ENCODE measurements at regions of chr1 and their contacts with region 1.

Region 1: DNA sequence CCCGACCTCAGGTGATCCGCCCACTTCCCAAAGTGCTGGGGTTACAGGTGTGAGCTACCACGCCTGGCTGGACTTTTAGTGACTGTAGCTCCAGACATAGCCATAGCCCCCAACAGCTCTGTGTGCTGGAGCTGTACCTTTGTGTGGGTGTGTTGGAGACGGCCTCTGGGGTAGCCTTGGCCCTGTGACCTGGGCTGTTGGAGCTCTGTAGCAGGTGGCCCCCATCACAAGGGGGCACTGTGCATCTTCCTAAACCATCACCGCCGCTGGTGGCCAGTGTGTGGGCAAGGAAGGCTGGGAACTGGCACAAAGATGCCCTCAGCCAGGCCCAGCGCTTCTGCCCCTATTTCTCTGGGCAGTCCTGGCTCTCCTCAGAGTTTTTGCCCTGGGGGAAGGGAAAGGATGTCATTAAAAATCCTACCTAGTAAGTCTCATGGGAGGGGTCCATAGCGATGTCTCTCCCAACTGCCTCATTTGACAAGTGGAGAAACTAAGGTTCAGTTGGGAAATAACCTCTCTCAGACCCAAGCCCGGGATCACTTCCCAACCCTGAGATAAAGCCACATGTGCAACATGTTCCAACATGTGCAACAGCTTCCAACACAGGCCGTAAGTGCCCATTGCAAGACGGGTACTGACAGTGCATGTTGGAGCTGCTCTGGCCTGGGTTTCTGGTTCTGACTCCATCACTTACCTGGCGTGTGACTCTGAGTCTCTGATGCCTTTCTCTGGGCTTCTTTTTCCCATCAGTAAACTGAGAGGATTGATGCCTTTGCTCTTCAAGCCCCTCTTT is 38.2 kb upstream of the FOXO6 start:
- DNase-seq: peak; percentile 47
- H3K4me3 Mint-ChIP-seq: no peak overlapping the region
- H3K27ac Mint-ChIP-seq: no peak overlapping the region
- H3K4me1 Mint-ChIP-seq: no peaks in the 10 kb centered on the region
- H3K27me3 Mint-ChIP-seq: peaks cover 2% of the 10 kb centered on the region

Region 2: GRCh38 chr1:41345434-41346075 is 22.5 kb after region 1 on chr1:
- CTCF ChIA-PET with region 1: no interaction called
- POLR2A ChIA-PET with region 1: no interaction called
- intact Hi-C with region 1: loop called (anchors 1 kb)
- DNase-seq: no peak
- H3K4me3 Mint-ChIP-seq: no peak overlapping the region
- H3K27ac Mint-ChIP-seq: no peak overlapping the region
- H3K4me1 Mint-ChIP-seq: peaks cover 5% of the 10 kb centered on the region
- H3K27me3 Mint-ChIP-seq: peaks cover 23% of the 10 kb centered on the region

Region 3: GRCh38 chr1:41387667-41388091 is 64.6 kb after region 1 on chr1:
- CTCF ChIA-PET with region 1: no interaction called
- POLR2A ChIA-PET with region 1: no interaction called
- intact Hi-C with region 1: no loop called
- DNase-seq: no peak
- H3K4me3 Mint-ChIP-seq: no peak overlapping the region
- H3K27ac Mint-ChIP-seq: no peak overlapping the region
- H3K4me1 Mint-ChIP-seq: peaks cover 9% of the 10 kb centered on the region
- H3K27me3 Mint-ChIP-seq: peaks cover 35% of the 10 kb centered on the region

Region 4: DNA sequence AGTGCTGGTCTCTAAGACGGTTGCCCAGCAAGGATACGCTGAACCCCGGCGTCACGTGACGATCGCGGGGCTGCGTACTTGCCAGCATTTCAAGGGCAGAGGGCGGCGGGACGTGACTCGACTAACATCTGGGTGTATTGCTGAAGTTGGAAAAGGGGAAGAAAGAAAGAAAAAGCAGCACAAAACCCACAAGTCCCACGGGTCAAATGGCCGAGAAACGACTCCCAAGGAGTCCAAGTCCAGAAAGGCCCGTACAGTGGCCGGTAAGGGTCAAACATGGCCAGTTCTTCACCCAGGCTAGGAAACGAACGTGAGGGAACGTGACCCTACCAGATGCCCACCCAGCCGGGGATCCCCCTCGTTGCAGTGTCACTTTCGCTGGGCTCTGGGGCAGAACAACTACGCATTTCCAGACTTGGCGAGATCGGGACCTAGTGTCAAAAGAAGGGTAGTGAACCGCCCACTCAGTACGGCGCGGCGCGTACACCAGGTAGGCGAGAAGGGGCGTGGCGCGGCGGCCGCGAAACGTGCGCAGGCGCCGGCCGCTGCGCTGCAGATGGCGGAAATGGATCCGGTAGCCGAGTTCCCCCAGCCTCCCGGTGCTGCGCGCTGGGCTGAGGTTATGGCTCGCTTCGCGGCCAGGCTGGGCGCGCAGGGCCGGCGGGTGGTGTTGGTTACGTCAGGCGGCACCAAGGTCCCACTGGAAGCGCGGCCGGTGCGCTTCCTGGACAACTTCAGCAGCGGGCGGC is 1133.2 kb after region 1 on chr1 and contains the starts of genes PPCS and ZMYND12:
- CTCF ChIA-PET with region 1: no interaction called
- POLR2A ChIA-PET with region 1: no interaction called
- intact Hi-C with region 1: no loop called
- DNase-seq: peak; percentile 95
- H3K4me3 Mint-ChIP-seq: peak within 1 kb of the TSS; percentile 79
- H3K27ac Mint-ChIP-seq: peak within 1 kb of the TSS; percentile 91
- H3K4me1 Mint-ChIP-seq: peaks cover 23% of the 10 kb centered on the region
- H3K27me3 Mint-ChIP-seq: no peaks in the 10 kb centered on the region
- total RNA-seq, gene PPCS: 50.8 to 52.3 TPM
- total RNA-seq, gene ZMYND12: 0.97 to 1.3 TPM